WTC11 (cell line): ENCODE measurements at regions of chr14 and their contacts with region 1.

Region 1: GRCh38 chr14:60349663-60350365 is 100.8 kb downstream of the PPM1A start:
- DNase-seq: peak; percentile 22
- ATAC-seq: peak; percentile 79
- H3K4me3 Mint-ChIP-seq: peak overlapping the region; percentile 44
- H3K27ac Mint-ChIP-seq: no peak overlapping the region
- H3K4me1 Mint-ChIP-seq: peaks cover 58% of the 10 kb centered on the region
- H3K27me3 Mint-ChIP-seq: no peaks in the 10 kb centered on the region; the same call in 1 of the 2 replicates
- CTCF ChIP-seq: peak; percentile 75

Region 2: DNA sequence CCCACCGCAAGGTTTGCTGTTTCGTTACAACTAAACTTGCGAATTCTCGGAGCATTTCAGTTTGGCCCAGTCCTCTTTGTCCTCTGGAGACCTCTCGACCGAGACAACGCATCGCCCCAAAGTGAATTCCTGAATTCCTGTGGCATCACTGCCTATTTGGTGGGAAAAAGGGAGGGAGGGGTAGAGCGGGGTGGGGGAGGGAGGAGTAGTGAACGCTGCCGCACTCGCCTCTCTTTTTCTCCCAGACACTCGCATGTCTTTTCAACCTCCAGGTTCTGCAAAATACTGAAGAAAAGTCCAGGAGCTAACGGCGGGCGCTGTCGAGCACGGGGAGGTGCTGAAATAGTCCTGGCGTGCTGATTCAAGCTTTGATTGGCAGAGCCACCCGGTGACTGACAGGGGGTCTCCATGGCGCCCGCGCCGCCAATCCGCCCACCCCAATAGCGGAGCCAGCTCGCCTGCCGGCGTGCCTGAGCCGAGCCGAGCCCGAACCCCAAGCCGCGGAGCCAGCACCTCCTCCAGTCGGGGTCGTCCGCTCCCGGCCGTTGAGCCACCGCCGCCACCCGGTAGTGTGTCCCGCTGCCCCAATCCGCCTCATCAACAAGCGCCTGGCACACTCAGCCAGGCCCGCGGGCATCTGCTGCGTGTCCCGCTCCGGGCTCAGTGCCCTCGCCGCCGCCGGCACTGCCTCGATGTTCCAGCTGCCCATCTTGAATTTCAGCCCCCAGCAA is 159.1 kb after region 1 on chr14 and contains the start of gene SIX6:
- CTCF ChIA-PET with region 1: interaction called, 22 read pairs
- POLR2A ChIA-PET with region 1: no interaction called
- DNase-seq: peak; percentile 82
- ATAC-seq: peak; percentile 38
- H3K4me3 Mint-ChIP-seq: peak within 1 kb of the TSS; percentile 72
- H3K27ac Mint-ChIP-seq: no peak within 1 kb of the TSS
- H3K4me1 Mint-ChIP-seq: peaks cover 75% of the 10 kb centered on the region
- H3K27me3 Mint-ChIP-seq: peaks cover 100% of the 10 kb centered on the region
- CTCF ChIP-seq: no peak
- total RNA-seq, gene SIX6: 0.07 TPM in 1 of 3 replicates, not detected in the others

Region 3: DNA sequence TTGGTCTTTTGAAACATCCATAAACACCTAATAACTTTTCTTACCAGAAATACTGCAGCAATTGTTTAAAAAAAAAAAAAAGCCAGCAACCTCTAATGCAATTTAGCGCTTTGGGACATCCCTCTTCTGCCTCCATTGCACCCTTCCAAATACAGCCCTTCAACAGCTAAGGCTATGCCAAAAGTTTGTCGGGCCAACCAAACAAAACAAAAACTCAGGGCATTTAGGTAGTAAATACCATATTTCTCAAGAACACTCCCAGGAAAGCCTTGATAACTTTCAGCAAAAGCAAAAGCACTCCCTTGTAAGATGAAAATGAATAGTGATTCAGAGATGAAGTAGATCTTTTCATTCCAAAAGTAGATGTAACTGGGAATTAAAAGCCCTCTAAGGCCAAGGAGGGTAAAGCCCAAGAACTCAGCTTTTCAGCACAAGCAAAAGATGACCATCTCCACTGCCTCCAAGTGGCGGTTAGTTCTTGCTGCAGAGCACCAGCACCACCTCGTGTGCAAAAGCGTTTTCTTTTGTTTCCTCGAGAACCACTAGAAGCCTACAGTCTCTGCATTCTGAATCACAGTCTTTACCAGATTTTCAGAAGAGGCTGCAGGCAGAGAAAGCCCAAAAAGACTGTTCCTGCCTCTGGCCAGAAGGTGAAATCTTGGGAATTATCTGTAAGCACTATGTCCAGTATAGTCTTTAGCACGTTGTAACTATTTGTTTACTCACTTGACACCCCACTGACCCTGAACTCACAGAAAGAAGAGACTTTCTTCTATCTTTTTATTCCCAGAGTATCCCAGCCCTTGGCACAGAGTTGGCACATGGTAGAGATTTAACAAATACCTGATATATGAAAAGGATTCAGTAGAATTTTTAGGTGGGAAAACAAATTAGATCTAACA is 212.3 kb after region 1 on chr14:
- CTCF ChIA-PET with region 1: interaction called, 23 read pairs
- POLR2A ChIA-PET with region 1: no interaction called
- DNase-seq: peak; percentile 68
- ATAC-seq: peak; percentile 98
- H3K4me3 Mint-ChIP-seq: no peak overlapping the region
- H3K27ac Mint-ChIP-seq: no peak overlapping the region
- H3K4me1 Mint-ChIP-seq: peaks cover 11% of the 10 kb centered on the region
- H3K27me3 Mint-ChIP-seq: no peaks in the 10 kb centered on the region
- CTCF ChIP-seq: peak; percentile 58; the same call in 1 of the 2 replicates